Heart right ventricle (tissue), 16 donors: ENCODE measurements at regions of chr3 and their contacts with region 1.

Region 1: GRCh38 chr3:51498876-51499738 is 708 bp downstream of the DCAF1 start:
- DNase-seq: peak; percentile 93
- ATAC-seq: peak; percentile 78 to 91 (median 84)
- H3K4me3 ChIP-seq: peak overlapping the region; percentile 62 to 93 (median 80)
- H3K27ac ChIP-seq: peak overlapping the region; percentile 81 to 97 (median 95)
- H3K4me1 ChIP-seq: peaks cover 0 to 15% (median 10%) of the 10 kb centered on the region in 9 donors
- H3K27me3 ChIP-seq: no peaks in the 10 kb centered on the region
- CTCF ChIP-seq: no peak

Region 2: DNA sequence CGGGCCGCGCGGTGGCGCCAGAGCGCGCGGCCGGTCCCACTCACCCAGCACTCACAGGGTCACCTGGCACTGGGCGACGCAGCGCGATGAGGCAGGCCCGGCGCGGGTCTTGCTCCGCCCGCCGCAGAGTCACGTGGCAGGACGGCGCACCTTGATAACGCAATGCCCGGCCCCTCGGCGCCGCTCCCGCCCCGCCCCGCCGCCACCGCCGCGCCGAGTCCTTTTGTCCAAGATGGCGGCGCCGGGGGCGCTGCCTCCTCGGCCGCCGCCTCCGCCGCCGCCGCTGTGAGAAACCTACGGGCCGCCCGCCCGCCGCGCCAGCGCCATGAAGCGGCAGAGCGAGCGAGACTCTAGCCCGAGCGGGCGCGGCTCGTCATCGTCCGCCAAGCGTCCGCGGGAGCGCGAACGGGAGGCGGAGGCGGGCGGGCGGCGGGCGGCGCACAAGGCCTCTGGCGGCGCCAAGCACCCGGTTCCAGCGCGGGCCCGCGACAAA is 108.0 kb before region 1 on chr3 and contains the start of gene RBM15B:
- intact Hi-C with region 1: loop called in 3 of 10 experiments (anchors 5 kb)
- DNase-seq: peak; percentile 97 to 98
- ATAC-seq: peak; percentile 94 to 98 (median 97)
- H3K4me3 ChIP-seq: peak within 1 kb of the TSS; percentile 36 to 76 (median 68)
- H3K27ac ChIP-seq: peak within 1 kb of the TSS; percentile 61 to 97 (median 90)
- H3K4me1 ChIP-seq: peaks cover 33 to 91% (median 85%) of the 10 kb centered on the region in 9 donors
- H3K27me3 ChIP-seq: no peaks in the 10 kb centered on the region
- CTCF ChIP-seq: peak in 7 of 9 donors; percentile 90 to 99 (median 92)
- total RNA-seq, gene RBM15B: 11.3 to 17.1 (median 13.7) TPM

Region 3: GRCh38 chr3:51538459-51539290 is 39.6 kb after region 1 on chr3 and contains the start of gene RAD54L2:
- intact Hi-C with region 1: loop called in 2 of 10 experiments (anchors 5 kb)
- DNase-seq: peak; percentile 83 to 85
- ATAC-seq: peak; percentile 95 to 98 (median 97)
- H3K4me3 ChIP-seq: peak within 1 kb of the TSS; percentile 79 to 98 (median 96)
- H3K27ac ChIP-seq: peak within 1 kb of the TSS; percentile 33 to 95 (median 92)
- H3K4me1 ChIP-seq: peaks cover 11 to 31% (median 24%) of the 10 kb centered on the region in 9 donors
- H3K27me3 ChIP-seq: no peaks in the 10 kb centered on the region
- CTCF ChIP-seq: peak in 5 of 9 donors; percentile 30 to 62 (median 42)
- total RNA-seq, gene RAD54L2: 11.5 to 14.5 (median 13.4) TPM

Region 4: DNA sequence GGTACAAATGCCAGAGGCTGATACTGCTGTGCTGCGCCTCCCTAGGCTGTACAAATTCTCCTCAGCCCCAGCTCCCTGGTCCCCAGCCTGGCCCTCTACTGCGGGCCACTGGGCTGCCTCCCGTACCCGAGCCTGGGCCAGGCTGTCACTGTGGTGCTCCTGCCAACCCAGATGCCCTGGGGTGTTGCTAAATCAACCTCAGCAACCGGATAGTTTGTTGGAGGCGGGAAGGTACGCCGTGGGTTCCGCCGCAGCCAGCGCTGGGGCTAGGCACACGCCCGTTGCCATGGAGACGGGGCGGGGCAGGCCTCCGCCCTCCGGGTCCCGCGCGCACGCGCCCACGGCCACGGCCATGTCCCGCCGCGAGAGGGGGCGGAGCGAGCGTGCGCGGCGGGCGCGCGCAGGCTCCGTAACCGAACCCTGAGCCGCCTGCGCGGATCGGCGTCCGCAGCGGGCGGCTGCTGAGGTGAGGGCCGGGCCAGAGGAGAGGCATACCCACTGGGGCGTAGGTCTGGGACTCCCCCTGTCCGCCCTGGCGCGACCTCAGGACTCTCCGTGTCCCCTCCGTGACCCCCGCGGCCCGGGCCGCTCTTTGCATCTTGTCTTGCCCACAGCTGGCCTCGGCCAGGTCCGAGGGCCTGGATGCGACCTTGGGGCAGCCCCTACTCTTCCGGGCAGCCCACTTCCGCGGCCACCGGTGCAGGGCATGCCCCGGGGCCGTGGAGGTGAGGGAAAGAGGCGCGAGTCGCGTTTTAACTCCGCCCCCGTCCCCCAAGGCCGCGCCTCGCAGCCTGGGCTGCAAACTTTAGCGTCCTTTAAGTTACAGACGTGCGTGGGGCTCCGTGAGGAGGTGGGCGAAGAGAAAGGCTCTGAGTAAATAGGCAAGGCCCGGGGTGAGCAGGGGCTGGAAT is 172.0 kb after region 1 on chr3 and contains the start of gene TEX264:
- intact Hi-C with region 1: loop called in 8 of 10 experiments (anchors 1 to 5 kb)
- DNase-seq: peak; percentile 87 to 95
- ATAC-seq: peak; percentile 90 to 96 (median 94)
- H3K4me3 ChIP-seq: peak within 1 kb of the TSS; percentile 72 to 98 (median 88)
- H3K27ac ChIP-seq: peak within 1 kb of the TSS; percentile 90 to 99 (median 97)
- H3K4me1 ChIP-seq: peaks cover 7 to 65% (median 40%) of the 10 kb centered on the region in 9 donors
- H3K27me3 ChIP-seq: no peaks in the 10 kb centered on the region
- CTCF ChIP-seq: peak in 1 of 9 donors; percentile 10
- total RNA-seq, gene TEX264: 28.4 to 50.1 (median 33.4) TPM

Region 5: GRCh38 chr3:51682079-51682478 is 183.0 kb after region 1 on chr3:
- intact Hi-C with region 1: loop called in 4 of 10 experiments (anchors 1 to 5 kb)
- DNase-seq: peak in 1 of 2 donors; percentile 81
- ATAC-seq: peak; percentile 45 to 81 (median 67)
- H3K4me3 ChIP-seq: peak overlapping the region in 1 of 10 donors; percentile 20
- H3K27ac ChIP-seq: peak overlapping the region in 9 of 10 donors; percentile 24 to 96 (median 93)
- H3K4me1 ChIP-seq: peaks cover 51 to 98% (median 88%) of the 10 kb centered on the region in 9 donors
- H3K27me3 ChIP-seq: no peaks in the 10 kb centered on the region
- CTCF ChIP-seq: peak; percentile 61 to 85 (median 83)

Region 6: DNA sequence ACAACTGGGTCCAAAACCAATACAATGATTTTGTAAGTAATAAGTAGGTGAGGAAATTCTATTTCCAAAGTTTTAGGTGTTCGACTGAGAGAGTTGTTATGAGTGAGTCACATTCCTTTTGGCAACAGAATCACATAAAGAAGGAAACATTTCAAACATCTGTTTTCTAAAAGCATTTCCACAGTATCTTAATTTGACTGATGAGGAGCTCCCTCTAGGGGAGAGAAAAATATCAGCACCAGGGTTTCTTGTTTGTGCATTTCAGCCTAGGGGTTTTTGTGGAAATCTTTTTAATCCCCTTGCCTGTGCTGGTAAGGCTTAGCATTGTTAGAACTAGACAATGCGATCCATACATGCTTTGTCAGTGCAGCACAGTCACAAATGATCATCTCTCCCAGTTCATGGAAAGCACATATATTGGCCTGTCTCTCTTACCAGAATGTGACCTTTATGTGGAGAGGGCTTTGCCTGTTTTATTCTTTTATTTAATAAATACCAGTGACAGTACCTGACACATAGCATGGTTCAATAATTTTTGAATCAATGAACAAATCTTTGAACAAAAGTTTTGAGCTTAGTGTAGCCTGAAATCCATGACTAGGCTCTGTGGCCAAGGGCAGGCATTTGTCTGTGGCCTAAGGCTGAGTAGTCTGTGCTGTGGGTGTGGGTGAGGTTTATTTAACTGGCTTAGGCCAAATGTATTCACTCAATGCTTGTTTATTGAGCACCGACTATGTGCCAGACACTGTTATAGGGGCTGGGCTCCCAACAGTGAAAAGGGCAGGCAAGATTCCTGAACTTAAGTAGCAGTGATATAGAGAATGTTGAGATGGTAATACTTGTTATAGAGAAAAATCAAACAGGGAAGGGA is 301.0 kb after region 1 on chr3:
- intact Hi-C with region 1: loop called (anchors 1 to 10 kb)
- DNase-seq: peak in 1 of 2 donors; percentile 33
- ATAC-seq: peak in 5 of 8 donors; percentile 57 to 71 (median 69)
- H3K4me3 ChIP-seq: no peak overlapping the region
- H3K27ac ChIP-seq: no peak overlapping the region
- H3K4me1 ChIP-seq: peaks cover 0 to 5% (median 0%) of the 10 kb centered on the region in 9 donors
- H3K27me3 ChIP-seq: peaks cover 0 to 49% (median 31%) of the 10 kb centered on the region in 7 donors
- CTCF ChIP-seq: peak; percentile 63 to 87 (median 81)